HCT116 (cell line): ENCODE measurements at regions of chr12 and their contacts with region 1.

Region 1: DNA sequence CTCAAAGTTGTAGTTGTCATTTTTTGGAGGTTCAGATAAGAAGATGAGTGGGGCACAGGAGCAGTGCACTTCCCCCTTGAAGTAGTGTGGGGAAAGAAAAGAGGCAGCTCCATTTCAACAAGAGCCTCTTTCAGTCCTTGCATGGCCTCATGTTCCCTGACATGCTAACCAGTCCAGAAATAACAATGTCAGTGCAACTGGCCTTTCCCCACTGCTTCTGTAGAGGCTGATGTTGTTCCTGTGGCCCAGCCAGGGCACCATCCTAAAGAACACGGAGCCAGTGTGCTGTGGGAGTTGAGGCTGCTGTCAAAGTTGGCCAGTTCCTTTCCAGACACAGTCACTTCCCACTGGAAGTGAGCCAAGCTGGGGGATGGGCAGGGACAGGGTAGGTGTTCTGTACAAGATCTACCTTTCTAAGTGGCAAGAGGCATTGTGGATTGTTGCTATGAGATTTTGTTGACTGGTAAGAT is 77.7 kb upstream of the SLC38A2 start:
- DNase-seq: no peak
- ATAC-seq: peak; percentile 46
- H3K4me3 ChIP-seq: peak overlapping the region in 1 of 2 experiments; percentile 4; a peak in 1 of 4 replicates
- H3K27ac ChIP-seq: peak overlapping the region; percentile 96
- H3K4me1 ChIP-seq: peaks cover 91 to 94% of the 10 kb centered on the region in 2 experiments
- H3K27me3 ChIP-seq: no peaks in the 10 kb centered on the region
- CTCF ChIP-seq: no peak
- POLR2A ChIP-seq: no peak
- RAD21 ChIP-seq: peak; percentile 13; the same call in 1 of the 2 replicates

Region 2: DNA sequence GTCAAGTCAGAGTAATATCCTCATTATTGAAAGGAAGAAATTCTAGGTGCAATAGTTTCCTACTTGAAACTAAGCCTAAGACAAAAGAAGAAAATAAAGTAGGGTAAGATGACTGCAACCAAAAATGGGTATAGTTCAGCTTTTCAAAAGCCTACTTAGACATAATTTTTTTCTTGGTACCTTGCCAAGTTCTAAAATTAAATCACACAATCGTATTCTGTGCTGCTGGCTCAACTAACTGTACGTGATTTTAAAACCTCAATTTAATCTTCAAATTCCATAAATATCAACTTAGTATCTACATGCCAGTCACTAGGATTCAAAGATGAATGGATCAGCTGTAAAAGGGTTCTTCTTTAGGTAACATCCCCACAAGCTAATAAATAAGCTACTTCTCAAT is 516.8 kb before region 1 on chr12:
- CTCF ChIA-PET with region 1: no interaction called
- POLR2A ChIA-PET with region 1: no interaction called
- RAD21 ChIA-PET with region 1: no interaction called
- intact Hi-C with region 1: no loop called
- DNase-seq: no peak
- ATAC-seq: no peak
- H3K4me3 ChIP-seq: no peak overlapping the region
- H3K27ac ChIP-seq: no peak overlapping the region
- H3K4me1 ChIP-seq: no peaks in the 10 kb centered on the region
- H3K27me3 ChIP-seq: no peaks in the 10 kb centered on the region
- CTCF ChIP-seq: no peak
- POLR2A ChIP-seq: no peak
- RAD21 ChIP-seq: no peak

Region 3: DNA sequence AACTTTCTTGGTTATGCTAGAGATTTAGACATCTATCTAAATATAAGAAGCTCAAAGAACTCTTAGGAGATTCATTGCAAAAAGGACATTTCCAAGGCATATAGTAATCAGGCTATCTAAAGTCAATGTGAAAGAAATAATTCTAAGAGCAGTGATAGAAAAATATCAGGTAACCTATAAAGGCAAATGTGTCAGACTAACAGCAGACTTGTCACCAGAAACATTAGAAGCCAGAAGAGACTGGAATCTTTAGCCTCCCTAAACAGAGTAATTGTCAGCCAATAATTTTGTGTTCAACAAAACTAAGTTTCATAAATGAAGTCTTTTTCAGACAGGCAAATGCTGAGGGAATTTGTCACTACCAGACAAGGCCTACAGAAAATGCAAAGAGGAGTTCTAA is 337.9 kb before region 1 on chr12:
- CTCF ChIA-PET with region 1: no interaction called
- POLR2A ChIA-PET with region 1: no interaction called
- RAD21 ChIA-PET with region 1: no interaction called
- intact Hi-C with region 1: no loop called
- DNase-seq: no peak
- ATAC-seq: no peak
- H3K4me3 ChIP-seq: no peak overlapping the region
- H3K27ac ChIP-seq: no peak overlapping the region
- H3K4me1 ChIP-seq: no peaks in the 10 kb centered on the region
- H3K27me3 ChIP-seq: no peaks in the 10 kb centered on the region
- CTCF ChIP-seq: no peak
- POLR2A ChIP-seq: no peak
- RAD21 ChIP-seq: no peak

Region 4: GRCh38 chr12:46364777-46365580 is 85.3 kb before region 1 on chr12:
- CTCF ChIA-PET with region 1: no interaction called
- POLR2A ChIA-PET with region 1: interaction called, 3 read pairs
- RAD21 ChIA-PET with region 1: no interaction called
- intact Hi-C with region 1: loop called (anchors 5 kb)
- DNase-seq: no peak
- ATAC-seq: 0 out of 2 replicates have a peak, but pooled peaks have one; percentile 23
- H3K4me3 ChIP-seq: no peak overlapping the region
- H3K27ac ChIP-seq: peak overlapping the region; percentile 20; the same call in 1 of the 2 replicates
- H3K4me1 ChIP-seq: peaks cover 25 to 53% of the 10 kb centered on the region in 2 experiments
- H3K27me3 ChIP-seq: no peaks in the 10 kb centered on the region
- CTCF ChIP-seq: no peak
- POLR2A ChIP-seq: no peak
- RAD21 ChIP-seq: no peak